ENCODE measurements at regions of chr9 and their contacts with region 1.

Region 1: DNA sequence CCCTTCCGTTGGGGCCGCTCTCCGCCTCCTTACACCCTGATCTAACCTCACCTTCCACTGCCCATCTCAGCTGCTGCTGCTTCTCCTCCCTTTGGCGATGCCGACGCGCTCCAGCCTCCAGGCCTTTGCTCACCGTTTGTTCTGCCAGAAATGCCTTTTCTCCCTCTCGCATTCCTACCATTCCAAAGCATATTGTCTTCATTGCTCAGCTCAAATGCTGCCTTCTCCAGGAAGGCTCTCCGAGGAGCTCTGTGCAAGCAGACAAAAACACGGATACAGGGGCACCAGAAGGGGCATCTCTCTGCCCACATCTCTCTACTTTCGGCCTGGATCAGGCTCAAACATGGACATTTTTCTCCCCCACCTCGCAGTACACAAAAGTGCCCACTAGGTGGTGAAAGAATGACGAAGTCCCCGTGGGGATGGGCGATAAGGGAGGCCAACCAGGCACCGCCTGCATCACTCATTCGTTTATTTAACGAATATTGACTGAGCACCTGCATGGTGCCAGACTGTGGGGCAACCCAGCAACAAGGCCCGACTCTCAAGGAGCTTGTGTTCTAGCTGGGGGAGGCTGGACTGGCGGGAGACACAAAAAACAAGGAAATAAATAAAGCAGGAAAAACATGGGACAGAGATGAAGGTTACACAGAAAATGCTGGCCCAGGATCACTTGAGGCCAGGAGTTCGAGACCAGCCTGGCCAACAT is 7.3 kb upstream of the GRHPR start:
- DNase-seq: peak; percentile 75
- ATAC-seq: peak; percentile 70
- H3K4me3 Mint-ChIP-seq: peak overlapping the region; percentile 40
- H3K27ac Mint-ChIP-seq: peak overlapping the region; percentile 81
- H3K4me1 Mint-ChIP-seq: peaks cover 45% of the 10 kb centered on the region
- H3K27me3 Mint-ChIP-seq: peaks cover 2% of the 10 kb centered on the region; the same call in 1 of the 2 replicates
- CTCF ChIP-seq: peak; percentile 67

Region 2: GRCh38 chr9:36802191-36802920 is 612.8 kb before region 1 on chr9:
- CTCF ChIA-PET with region 1: no interaction called
- POLR2A ChIA-PET with region 1: no interaction called
- DNase-seq: no peak
- ATAC-seq: peak; percentile 23; the same call in 1 of the 2 replicates
- H3K4me3 Mint-ChIP-seq: no peak overlapping the region
- H3K27ac Mint-ChIP-seq: no peak overlapping the region
- H3K4me1 Mint-ChIP-seq: peaks cover 28% of the 10 kb centered on the region
- H3K27me3 Mint-ChIP-seq: no peaks in the 10 kb centered on the region; the same call in none of the 2 replicates
- CTCF ChIP-seq: no peak

Region 3: DNA sequence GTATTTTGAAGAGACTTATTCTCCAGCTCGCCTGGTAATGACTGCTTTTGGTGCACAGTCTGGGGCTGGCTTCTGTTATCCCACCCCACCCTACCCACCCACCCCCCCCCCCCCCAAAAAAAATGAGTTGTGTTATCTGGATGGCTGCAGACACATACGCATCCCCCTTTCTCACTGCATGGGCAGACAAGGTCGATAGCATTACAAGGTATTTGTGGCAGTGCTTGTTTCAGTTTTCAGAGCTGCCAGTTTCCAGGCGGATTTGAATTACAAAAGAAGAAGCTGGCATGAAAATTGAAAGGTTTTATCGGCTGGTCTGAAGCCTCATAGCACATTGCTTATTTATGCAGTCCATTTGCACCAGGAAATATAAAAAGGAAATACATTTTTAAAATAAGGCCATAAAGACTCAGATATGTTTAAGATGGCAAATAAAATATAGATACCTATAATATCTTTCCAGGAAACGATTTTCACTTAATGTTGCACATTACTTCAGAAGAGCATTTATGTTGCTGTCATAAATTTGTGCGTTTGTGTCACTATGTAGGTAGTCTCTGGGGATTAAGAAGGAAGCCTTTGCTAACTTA is 77.8 kb before region 1 on chr9:
- CTCF ChIA-PET with region 1: interaction called, 11 read pairs
- POLR2A ChIA-PET with region 1: no interaction called
- DNase-seq: no peak
- ATAC-seq: no peak
- H3K4me3 Mint-ChIP-seq: no peak overlapping the region
- H3K27ac Mint-ChIP-seq: no peak overlapping the region
- H3K4me1 Mint-ChIP-seq: peaks cover 41% of the 10 kb centered on the region
- H3K27me3 Mint-ChIP-seq: no peaks in the 10 kb centered on the region
- CTCF ChIP-seq: no peak

Region 4: DNA sequence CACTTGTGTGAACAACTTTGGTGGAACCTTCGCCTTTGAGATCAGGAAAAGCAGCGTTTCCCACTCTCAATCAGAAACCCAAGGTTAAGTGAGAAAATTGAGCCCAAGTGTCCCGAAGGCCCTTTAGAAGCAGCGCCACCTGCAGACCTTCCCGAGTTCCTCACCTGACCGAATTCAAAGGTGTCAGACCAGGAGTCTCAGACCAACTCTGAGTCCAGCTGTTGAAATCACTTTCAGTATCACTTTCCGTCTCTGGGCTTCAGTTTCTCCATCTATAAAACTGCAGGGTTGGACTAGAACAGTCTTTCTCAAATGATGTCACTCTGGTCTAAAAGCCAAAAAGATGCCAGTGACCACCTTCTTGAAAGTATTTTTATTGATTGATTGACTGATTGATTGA is 24.4 kb before region 1 on chr9:
- CTCF ChIA-PET with region 1: interaction called, 29 read pairs
- POLR2A ChIA-PET with region 1: no interaction called
- DNase-seq: peak; percentile 75
- ATAC-seq: peak; percentile 85
- H3K4me3 Mint-ChIP-seq: no peak overlapping the region
- H3K27ac Mint-ChIP-seq: no peak overlapping the region
- H3K4me1 Mint-ChIP-seq: no peaks in the 10 kb centered on the region
- H3K27me3 Mint-ChIP-seq: no peaks in the 10 kb centered on the region
- CTCF ChIP-seq: peak; percentile 60; the same call in 1 of the 2 replicates

Region 5: DNA sequence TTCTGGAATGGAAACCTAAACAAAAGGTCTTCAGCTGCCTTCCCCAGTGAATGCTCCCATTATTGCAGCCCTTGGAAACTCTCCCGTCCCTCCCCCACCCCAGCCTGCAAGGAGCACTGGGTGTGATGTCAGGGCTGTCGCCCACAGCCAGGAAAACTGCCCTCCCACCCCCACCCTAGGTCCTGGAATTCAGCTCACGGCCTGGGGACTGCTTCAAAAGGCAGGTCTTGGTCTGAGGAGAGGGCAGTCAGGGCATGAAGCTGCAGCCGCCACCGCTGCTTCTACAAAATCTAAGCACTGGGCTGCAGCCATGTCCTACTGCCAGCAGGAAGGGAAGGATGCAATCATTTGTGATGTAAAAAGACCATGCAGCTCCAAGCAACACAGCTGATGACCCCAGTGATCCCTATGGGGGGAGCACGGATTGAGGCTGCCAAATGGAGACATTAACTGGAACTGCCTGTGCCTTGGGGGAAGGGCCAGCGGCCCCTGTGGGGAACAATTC is 18.8 kb after region 1 on chr9:
- CTCF ChIA-PET with region 1: interaction called, 20 read pairs
- POLR2A ChIA-PET with region 1: no interaction called
- DNase-seq: peak; percentile 55
- ATAC-seq: peak; percentile 70
- H3K4me3 Mint-ChIP-seq: peak overlapping the region; percentile 33
- H3K27ac Mint-ChIP-seq: peak overlapping the region; percentile 97
- H3K4me1 Mint-ChIP-seq: peaks cover 27% of the 10 kb centered on the region
- H3K27me3 Mint-ChIP-seq: no peaks in the 10 kb centered on the region
- CTCF ChIP-seq: no peak

Region 6: GRCh38 chr9:37465249-37466036 is 50.3 kb after region 1 on chr9 and contains the start of gene ZBTB5:
- CTCF ChIA-PET with region 1: interaction called, 16 read pairs
- POLR2A ChIA-PET with region 1: interaction called, 3 read pairs
- DNase-seq: peak; percentile 99
- ATAC-seq: peak; percentile 79
- H3K4me3 Mint-ChIP-seq: peak within 1 kb of the TSS; percentile 98
- H3K27ac Mint-ChIP-seq: peak within 1 kb of the TSS; percentile 100
- H3K4me1 Mint-ChIP-seq: peaks cover 31% of the 10 kb centered on the region
- H3K27me3 Mint-ChIP-seq: no peaks in the 10 kb centered on the region
- CTCF ChIP-seq: no peak
- total RNA-seq, gene ZBTB5: 13.2 to 16.7 TPM (median 13.6 TPM) in 3 replicates